HepG2 (cell line): ENCODE measurements at regions of chr22 and their contacts with region 1.

Region 1: DNA sequence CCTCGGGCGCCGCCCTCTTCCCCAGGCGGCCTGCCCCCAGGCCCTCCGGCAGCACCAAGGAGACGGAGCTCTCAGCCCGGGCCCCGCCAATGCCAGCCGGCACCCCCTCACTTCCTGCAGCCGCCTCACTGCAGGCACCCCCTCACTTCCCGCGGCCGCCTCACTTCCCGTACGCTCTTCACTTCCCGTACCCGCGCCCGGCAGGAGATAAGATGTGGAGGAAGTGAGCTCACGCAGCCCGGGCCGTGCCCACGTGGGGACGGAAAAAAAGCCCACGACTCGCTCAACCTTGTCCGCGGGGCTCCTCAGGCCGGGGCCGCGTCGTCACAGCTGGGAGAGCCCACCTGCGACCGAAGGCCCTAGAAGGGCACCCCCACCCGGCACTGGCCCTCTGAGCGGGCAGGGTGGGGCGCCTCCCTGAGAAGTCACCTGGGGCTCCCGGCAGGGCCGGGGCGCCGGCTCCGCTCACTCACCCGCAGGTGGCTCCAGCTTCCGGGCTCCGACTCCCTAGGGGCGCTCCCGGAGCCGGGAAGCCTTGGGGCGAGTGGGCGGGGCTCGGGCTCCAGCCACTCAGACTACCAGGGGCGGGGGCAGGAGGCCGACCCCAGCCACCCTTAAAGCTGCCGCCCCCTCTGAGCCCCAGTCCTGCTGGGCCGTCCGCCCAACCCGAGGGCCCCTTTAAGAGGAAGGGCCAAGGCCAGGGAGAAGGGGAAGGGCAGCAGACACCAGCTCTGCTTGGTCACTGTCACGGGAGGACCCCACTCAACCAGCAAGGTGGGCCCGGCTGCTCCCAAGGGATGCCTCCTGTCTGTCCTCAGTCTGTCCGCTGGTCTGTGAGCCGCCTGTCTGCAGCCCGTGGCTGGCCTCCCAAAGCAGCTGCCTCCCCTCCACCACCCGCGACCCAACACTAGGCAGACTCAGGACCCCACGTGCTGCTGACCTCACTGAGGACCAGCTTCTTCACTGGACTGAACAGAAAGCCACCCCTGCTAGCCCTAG is 31.4 kb downstream of the PISD start:
- DNase-seq: peak; percentile 75
- ATAC-seq: peak; percentile 80
- H3K4me3 ChIP-seq: peak overlapping the region; percentile 66 to 86 (median 77)
- H3K27ac ChIP-seq: peak overlapping the region; percentile 72
- H3K4me1 ChIP-seq: peaks cover 72% of the 10 kb centered on the region
- H3K27me3 ChIP-seq: no peaks in the 10 kb centered on the region
- CTCF ChIP-seq: peak; percentile 24; the same call in 1 of the 2 replicates
- EP300 ChIP-seq: no peak
- POLR2A ChIP-seq: peak; percentile 55 to 56; a peak in 3 of 4 replicates
- RAD21 ChIP-seq: no peak

Region 2: DNA sequence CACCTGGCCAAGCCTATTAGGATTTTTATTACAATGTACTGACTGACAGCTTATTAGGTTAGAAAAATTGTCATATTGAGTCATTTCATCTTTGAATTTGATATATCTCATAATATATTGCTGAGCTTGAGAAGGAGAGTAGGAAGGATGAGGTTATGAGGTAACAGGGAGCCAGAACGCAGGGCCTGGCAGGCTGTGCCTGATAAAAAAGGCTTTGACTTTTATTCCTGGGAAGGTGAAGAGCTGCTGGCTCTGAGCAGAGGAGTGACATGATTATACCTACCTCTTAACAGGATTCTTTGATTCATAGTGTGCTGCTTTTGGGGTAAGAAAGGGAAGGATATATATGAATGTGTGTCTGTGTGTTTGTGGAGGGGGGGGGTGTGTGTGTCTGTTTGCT is 63.4 kb before region 1 on chr22:
- CTCF ChIA-PET with region 1: interaction called, 30 read pairs
- POLR2A ChIA-PET with region 1: no interaction called
- in situ Hi-C with region 1: no loop called
- intact Hi-C with region 1: loop called (anchors 1 kb)
- DNase-seq: no peak
- ATAC-seq: no peak
- H3K4me3 ChIP-seq: no peak overlapping the region
- H3K27ac ChIP-seq: no peak overlapping the region
- H3K4me1 ChIP-seq: no peaks in the 10 kb centered on the region
- H3K27me3 ChIP-seq: no peaks in the 10 kb centered on the region
- CTCF ChIP-seq: no peak
- EP300 ChIP-seq: no peak
- POLR2A ChIP-seq: no peak
- RAD21 ChIP-seq: no peak

Region 3: DNA sequence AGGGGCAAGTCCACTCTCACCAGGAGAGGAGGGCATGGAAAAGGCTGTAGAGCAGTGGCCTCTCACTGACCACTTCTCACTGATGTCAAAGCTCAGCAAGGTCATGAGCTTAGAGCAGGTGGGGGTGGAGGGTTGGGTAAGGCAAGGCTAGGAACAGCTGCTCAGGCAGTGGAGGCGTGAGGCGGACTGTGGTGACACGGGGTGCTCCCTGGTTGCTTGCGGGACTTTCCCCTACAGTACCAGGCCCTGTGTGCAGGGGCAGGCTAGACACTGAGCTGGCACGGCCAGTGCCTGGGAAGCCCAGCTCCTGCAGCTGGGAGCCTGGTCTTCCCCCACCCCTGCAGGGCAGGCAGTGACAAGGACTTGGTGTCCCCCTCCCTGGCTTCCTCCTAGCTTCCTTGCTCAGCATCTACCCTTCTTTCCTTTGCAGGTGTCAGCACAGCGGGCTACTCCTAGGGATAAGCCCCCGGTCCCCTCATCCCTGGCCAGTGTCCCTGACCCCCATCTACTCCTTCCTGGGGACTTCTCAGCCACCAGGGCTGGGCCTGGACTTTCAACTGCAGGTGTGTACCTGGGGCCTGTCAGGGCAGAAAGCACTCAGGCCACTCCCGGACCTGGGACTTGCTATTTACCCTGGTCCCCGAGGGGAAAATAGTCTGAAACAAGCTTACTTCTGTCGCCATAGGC is 14.2 kb before region 1 on chr22:
- CTCF ChIA-PET with region 1: no interaction called
- POLR2A ChIA-PET with region 1: interaction called, 10 read pairs
- in situ Hi-C with region 1: no loop called
- intact Hi-C with region 1: no loop called
- DNase-seq: peak; percentile 31
- ATAC-seq: peak; percentile 56
- H3K4me3 ChIP-seq: no peak overlapping the region
- H3K27ac ChIP-seq: peak overlapping the region; percentile 33
- H3K4me1 ChIP-seq: peaks cover 40% of the 10 kb centered on the region
- H3K27me3 ChIP-seq: no peaks in the 10 kb centered on the region
- CTCF ChIP-seq: no peak
- EP300 ChIP-seq: no peak
- POLR2A ChIP-seq: peak in 1 of 2 experiments; percentile 55; a peak in 1 of 4 replicates
- RAD21 ChIP-seq: 0 out of 2 replicates have a peak, but pooled peaks have one; percentile 22

Region 4: GRCh38 chr22:32957200-32957803 is 1326.7 kb after region 1 on chr22:
- CTCF ChIA-PET with region 1: no interaction called
- POLR2A ChIA-PET with region 1: no interaction called
- in situ Hi-C with region 1: no loop called
- intact Hi-C with region 1: no loop called
- DNase-seq: no peak
- ATAC-seq: no peak
- H3K4me3 ChIP-seq: no peak overlapping the region
- H3K27ac ChIP-seq: no peak overlapping the region
- H3K4me1 ChIP-seq: peaks cover 23% of the 10 kb centered on the region
- H3K27me3 ChIP-seq: no peaks in the 10 kb centered on the region
- CTCF ChIP-seq: no peak
- EP300 ChIP-seq: no peak
- POLR2A ChIP-seq: no peak
- RAD21 ChIP-seq: no peak